CD8-positive, alpha-beta T cell (primary cell): ENCODE measurements at regions of chr12 and their contacts with region 1.

Region 1: GRCh38 chr12:67501362-67501761 is 147.2 kb upstream of the DYRK2 start:
- DNase-seq: no peak
- ATAC-seq: no peak
- H3K4me3 ChIP-seq: no peak overlapping the region
- H3K4me3 Mint-ChIP-seq: no peak overlapping the region
- H3K27ac ChIP-seq: no peak overlapping the region
- H3K27ac Mint-ChIP-seq: no peak overlapping the region
- H3K4me1 ChIP-seq: peaks cover 9% of the 10 kb centered on the region
- H3K4me1 Mint-ChIP-seq: peaks cover 24% of the 10 kb centered on the region
- H3K27me3 ChIP-seq: no peaks in the 10 kb centered on the region
- H3K27me3 Mint-ChIP-seq: no peaks in the 10 kb centered on the region
- CTCF ChIP-seq: no peak

Region 2: DNA sequence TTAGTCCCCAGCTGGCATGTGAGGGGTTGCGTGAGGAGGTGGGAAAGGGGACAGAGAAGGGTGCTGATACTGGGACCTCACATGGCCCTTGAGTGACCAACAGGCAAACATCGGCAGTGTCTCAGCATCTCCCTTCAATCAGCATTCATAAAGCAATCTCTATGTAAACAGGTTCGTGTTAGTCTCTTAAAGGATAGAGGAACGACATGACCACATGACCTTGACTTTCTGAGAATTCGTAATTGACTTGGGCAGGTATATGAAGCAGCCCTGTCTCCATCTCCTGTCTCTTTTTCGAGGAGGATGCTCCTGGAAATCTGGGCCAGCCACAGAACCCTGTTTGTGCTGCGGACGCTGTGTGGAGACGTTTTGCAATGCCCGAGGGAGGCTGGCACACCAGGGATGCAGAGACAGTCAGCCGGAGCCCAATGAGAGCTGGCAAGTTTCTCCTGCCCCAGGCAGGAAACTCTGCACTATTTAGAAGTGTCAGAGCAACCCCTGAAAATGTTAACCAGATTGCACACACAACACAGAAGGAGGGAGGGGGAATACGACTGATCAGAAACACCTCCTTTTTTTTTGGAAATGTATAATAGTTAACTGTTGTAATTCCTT is 43.8 kb after region 1 on chr12:
- CTCF ChIA-PET with region 1: no interaction called
- POLR2A ChIA-PET with region 1: no interaction called
- intact Hi-C with region 1: loop called in 1 of 2 experiments (anchors 5 kb)
- DNase-seq: no peak
- ATAC-seq: peak; percentile 54
- H3K4me3 ChIP-seq: no peak overlapping the region
- H3K4me3 Mint-ChIP-seq: peak overlapping the region; percentile 65
- H3K27ac ChIP-seq: no peak overlapping the region
- H3K27ac Mint-ChIP-seq: no peak overlapping the region
- H3K4me1 ChIP-seq: peaks cover 22% of the 10 kb centered on the region
- H3K4me1 Mint-ChIP-seq: peaks cover 49% of the 10 kb centered on the region
- H3K27me3 ChIP-seq: no peaks in the 10 kb centered on the region
- H3K27me3 Mint-ChIP-seq: no peaks in the 10 kb centered on the region
- CTCF ChIP-seq: no peak